Activated CD4-positive, alpha-beta T cell treated with anti-CD3 and anti-CD28 coated beads for 36 hours (primary cell): ENCODE measurements at regions of chr19 and their contacts with region 1.

Region 1: DNA sequence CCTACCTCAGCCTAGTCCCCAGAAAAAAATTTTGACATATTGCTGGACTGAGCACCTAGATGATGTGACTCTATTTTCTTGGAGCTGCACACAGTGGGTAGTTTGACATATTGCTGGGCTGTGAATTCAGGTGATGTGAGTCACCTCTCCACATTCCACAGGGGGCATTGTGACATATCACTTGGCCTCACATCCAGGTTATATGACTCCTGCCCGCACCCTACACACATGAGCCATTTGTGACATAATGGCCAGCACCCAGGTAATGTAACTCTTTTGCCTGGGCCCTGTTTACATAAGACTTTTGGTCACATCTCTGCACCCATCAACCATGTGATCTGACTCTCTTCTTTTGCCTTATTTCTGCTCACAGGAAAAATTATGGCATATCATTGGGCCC is 55.1 kb upstream of the ZNF43 start:
- DNase-seq: no peak
- ATAC-seq: no peak
- H3K4me3 Mint-ChIP-seq: no peak overlapping the region
- H3K27ac Mint-ChIP-seq: no peak overlapping the region
- H3K4me1 Mint-ChIP-seq: no peaks in the 10 kb centered on the region
- H3K27me3 Mint-ChIP-seq: peaks cover 2% of the 10 kb centered on the region

Region 2: GRCh38 chr19:21463449-21464105 is 427.5 kb before region 1 on chr19:
- CTCF ChIA-PET with region 1: no interaction called
- POLR2A ChIA-PET with region 1: no interaction called
- intact Hi-C with region 1: no loop called
- DNase-seq: peak; percentile 77
- ATAC-seq: peak; percentile 99
- H3K4me3 Mint-ChIP-seq: peak overlapping the region; percentile 82
- H3K27ac Mint-ChIP-seq: peak overlapping the region; percentile 82
- H3K4me1 Mint-ChIP-seq: peaks cover 3% of the 10 kb centered on the region
- H3K27me3 Mint-ChIP-seq: peaks cover 10% of the 10 kb centered on the region

Region 3: GRCh38 chr19:21758296-21758695 is 132.8 kb before region 1 on chr19:
- CTCF ChIA-PET with region 1: no interaction called
- POLR2A ChIA-PET with region 1: no interaction called
- intact Hi-C with region 1: loop called in 1 of 2 experiments (anchors 5 kb)
- DNase-seq: peak; percentile 38
- ATAC-seq: no peak
- H3K4me3 Mint-ChIP-seq: no peak overlapping the region
- H3K27ac Mint-ChIP-seq: no peak overlapping the region
- H3K4me1 Mint-ChIP-seq: peaks cover 22% of the 10 kb centered on the region
- H3K27me3 Mint-ChIP-seq: no peaks in the 10 kb centered on the region